H1 (cell line): ENCODE measurements at regions of chr17 and their contacts with region 1.

Region 1: GRCh38 chr17:75456417-75457046 is at the start of gene TMEM94:
- DNase-seq: peak; percentile 87 to 92
- H3K4me3 ChIP-seq: peak within 1 kb of the TSS; percentile 75 to 83 (median 80)
- H3K27ac ChIP-seq: peak within 1 kb of the TSS; percentile 85
- H3K4me1 ChIP-seq: peaks cover 0 to 7% (median 4%) of the 10 kb centered on the region in 4 experiments; a peak in 6 of 7 replicates
- H3K27me3 ChIP-seq: no peaks in the 10 kb centered on the region
- CTCF ChIP-seq: no peak
- EP300 ChIP-seq: no peak
- POLR2A ChIP-seq: peak; percentile 68 to 81
- RAD21 ChIP-seq: no peak
- total RNA-seq, gene TMEM94: 54.8 and 64.3 TPM in 2 replicates

Region 2: DNA sequence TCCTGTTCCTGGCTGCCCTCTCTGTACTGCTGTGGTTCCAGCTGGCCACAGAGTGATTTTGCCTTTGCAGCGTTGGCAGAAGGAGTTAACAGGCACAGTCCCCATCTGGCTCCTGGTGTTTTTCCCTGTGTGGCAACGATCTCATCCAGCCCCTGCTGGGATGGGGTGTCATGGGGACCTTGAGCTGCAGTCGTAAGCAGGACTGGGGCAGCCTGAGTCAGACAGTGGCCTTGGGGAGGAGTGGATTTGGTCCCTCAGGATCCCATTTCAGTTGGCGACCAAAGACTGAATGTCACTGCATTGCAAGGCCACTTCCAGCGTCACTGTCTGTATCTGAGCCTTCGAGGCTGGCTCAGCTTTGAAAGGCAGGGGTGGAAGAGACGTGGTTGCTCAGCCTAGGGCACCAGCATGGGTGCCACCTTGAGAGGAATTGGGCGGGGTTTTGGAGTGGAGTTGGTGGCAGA is 11.8 kb after region 1 on chr17:
- CTCF ChIA-PET with region 1: interaction called, 3 read pairs
- POLR2A ChIA-PET with region 1: interaction called, 10 read pairs
- DNase-seq: no peak
- H3K4me3 ChIP-seq: no peak overlapping the region
- H3K27ac ChIP-seq: no peak overlapping the region
- H3K4me1 ChIP-seq: no peaks in the 10 kb centered on the region
- H3K27me3 ChIP-seq: no peaks in the 10 kb centered on the region
- CTCF ChIP-seq: no peak
- EP300 ChIP-seq: no peak
- POLR2A ChIP-seq: no peak
- RAD21 ChIP-seq: no peak

Region 3: DNA sequence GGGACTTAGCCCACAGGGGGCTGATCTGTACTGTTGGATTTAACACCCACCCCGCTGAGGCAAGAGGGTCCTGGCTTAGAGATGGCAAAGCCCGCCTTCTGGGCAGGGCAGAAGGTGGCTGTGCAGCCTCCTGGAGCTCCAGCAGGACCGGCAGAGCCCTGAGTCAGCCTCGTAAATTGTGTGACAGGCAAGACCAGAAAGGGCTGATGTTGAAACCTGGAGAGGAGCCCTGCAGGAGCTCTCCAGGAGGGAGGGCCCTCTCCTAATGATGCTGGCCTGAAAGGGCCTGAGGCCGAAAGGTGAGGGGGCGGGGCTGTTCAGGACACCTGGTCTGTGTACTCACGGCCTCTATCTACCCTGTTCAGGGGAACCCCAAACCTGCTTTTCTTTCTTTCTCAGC is 108.5 kb after region 1 on chr17:
- CTCF ChIA-PET with region 1: no interaction called
- POLR2A ChIA-PET with region 1: no interaction called
- DNase-seq: no peak
- H3K4me3 ChIP-seq: no peak overlapping the region
- H3K27ac ChIP-seq: no peak overlapping the region
- H3K4me1 ChIP-seq: no peaks in the 10 kb centered on the region
- H3K27me3 ChIP-seq: no peaks in the 10 kb centered on the region
- CTCF ChIP-seq: no peak
- EP300 ChIP-seq: no peak
- POLR2A ChIP-seq: no peak
- RAD21 ChIP-seq: no peak